Common myeloid progenitor, CD34-positive (primary cell): ENCODE measurements at regions of chr14 and their contacts with region 1.

Region 1: GRCh38 chr14:90985601-90986242 is 74.7 kb downstream of the RPS6KA5 start:
- DNase-seq: no peak
- H3K4me3 ChIP-seq: no peak overlapping the region
- H3K27ac ChIP-seq: no peak overlapping the region
- H3K4me1 ChIP-seq: no peaks in the 10 kb centered on the region
- H3K27me3 ChIP-seq: no peaks in the 10 kb centered on the region

Region 2: GRCh38 chr14:91055016-91055415 is 69.3 kb after region 1 on chr14:
- CTCF ChIA-PET with region 1: no interaction called
- POLR2A ChIA-PET with region 1: interaction called, 11 read pairs
- DNase-seq: no peak
- H3K4me3 ChIP-seq: no peak overlapping the region
- H3K27ac ChIP-seq: no peak overlapping the region
- H3K4me1 ChIP-seq: peaks cover 0 to 18% (median 12%) of the 10 kb centered on the region in 4 experiments
- H3K27me3 ChIP-seq: no peaks in the 10 kb centered on the region